ENCODE measurements at regions of chr2 and their contacts with region 1.

Region 1: DNA sequence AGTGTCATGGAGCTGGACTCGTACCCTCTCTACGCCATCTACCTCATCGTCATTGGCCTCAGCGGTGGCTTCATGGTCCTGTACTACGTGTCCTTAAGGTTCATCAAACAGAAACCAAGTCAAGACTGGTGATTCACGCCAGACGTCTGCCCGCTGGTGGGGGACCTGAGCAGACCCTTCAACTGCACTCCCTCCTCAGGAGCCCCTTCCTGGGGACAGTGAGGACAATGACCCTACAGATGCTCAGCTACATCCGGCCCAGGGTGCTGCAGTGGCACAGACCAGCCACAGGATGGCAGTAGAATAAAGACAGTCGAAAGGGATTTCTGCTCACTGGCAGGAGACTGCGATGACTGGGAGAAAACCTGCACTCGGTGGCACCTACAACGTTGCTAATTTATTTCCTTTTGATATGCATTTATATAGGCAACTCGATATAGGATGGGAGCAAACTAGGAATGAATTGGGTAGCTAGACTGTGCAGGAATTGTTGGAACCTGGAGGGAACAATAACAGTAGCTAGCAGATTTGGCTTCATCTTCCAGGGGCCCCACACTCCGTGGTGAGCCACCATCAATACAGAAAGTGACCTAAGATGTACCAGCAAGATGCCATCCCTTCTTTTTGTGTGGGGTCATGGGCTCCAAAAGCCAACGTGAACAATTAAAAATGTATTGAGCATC is 39.2 kb downstream of the ABCG8 start:
- ATAC-seq: peak; percentile 41 to 80 (median 68)
- H3K4me3 ChIP-seq: no peak overlapping the region
- H3K27ac ChIP-seq: no peak overlapping the region
- H3K4me1 ChIP-seq: no peaks in the 10 kb centered on the region

Region 2: GRCh38 chr2:43611987-43612894 is 265.7 kb before region 1 on chr2:
- in situ Hi-C with region 1: loop called in 1 of 9 experiments (anchors 25 kb)
- ATAC-seq: peak; percentile 79 to 95 (median 88)
- H3K4me3 ChIP-seq: no peak overlapping the region
- H3K27ac ChIP-seq: no peak overlapping the region
- H3K4me1 ChIP-seq: no peaks in the 10 kb centered on the region

Region 3: DNA sequence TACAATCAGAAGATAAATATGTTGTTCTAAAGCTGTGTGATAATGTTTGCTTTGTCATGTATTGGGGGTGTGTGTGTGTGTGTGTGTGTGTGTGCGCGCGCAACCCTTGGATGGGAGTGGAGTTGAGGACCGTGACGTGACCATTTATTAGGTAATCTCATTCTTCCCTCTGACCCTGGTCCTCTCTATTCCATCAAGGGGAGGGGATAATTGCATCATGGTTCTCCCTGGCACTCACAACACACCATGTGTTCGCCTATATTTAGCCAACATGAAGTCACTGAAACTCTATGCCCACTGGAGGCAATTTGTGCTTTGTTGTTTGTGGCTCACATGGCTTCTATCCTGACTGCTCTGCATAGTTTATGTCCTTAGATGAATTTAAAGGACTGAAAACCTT is 197.6 kb after region 1 on chr2:
- in situ Hi-C with region 1: no loop called
- ATAC-seq: peak in 7 of 8 experiments; percentile 61 to 82 (median 78)
- H3K4me3 ChIP-seq: no peak overlapping the region
- H3K27ac ChIP-seq: no peak overlapping the region
- H3K4me1 ChIP-seq: no peaks in the 10 kb centered on the region